H1 (cell line): ENCODE measurements at regions of chr6 and their contacts with region 1.

Region 1: DNA sequence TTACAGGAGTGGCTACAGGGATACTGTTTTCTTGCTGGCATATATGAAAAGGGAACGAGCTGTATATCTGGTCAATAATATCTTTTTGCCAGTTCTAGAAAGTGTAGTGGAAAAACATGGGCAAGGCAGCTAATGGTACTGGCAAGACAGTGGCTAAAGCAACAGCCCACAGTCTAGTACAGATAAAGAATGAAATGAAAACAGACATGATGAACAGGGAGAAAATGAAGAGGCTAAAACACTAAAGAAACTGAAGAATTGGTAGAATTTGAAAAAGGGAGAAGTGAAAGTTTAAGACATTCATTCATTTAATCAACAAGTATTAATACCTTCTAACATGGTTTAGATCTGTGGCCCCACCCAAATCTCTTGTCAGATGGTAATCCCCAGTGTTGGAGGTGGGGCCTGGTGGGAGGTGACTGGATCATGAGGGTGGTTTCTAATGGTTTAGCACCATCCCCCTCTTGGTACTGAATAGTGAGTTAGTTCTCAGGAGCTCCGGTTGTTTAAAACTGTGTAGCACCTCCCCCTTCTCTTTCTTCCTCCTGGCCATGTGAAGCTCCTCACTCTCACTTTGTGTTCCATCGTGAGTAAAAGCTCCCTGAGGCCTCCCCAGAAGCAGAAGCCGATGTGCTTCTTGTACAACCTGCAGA is 18.1 kb downstream of the FAM184A start:
- DNase-seq: no peak
- H3K4me3 ChIP-seq: no peak overlapping the region
- H3K27ac ChIP-seq: no peak overlapping the region
- H3K4me1 ChIP-seq: no peaks in the 10 kb centered on the region; a peak in 1 of 7 replicates
- H3K27me3 ChIP-seq: no peaks in the 10 kb centered on the region
- CTCF ChIP-seq: no peak
- EP300 ChIP-seq: no peak
- POLR2A ChIP-seq: no peak
- RAD21 ChIP-seq: no peak

Region 2: GRCh38 chr6:118993803-118994251 is 66.6 kb before region 1 on chr6:
- CTCF ChIA-PET with region 1: no interaction called
- POLR2A ChIA-PET with region 1: no interaction called
- DNase-seq: no peak
- H3K4me3 ChIP-seq: no peak overlapping the region
- H3K27ac ChIP-seq: no peak overlapping the region
- H3K4me1 ChIP-seq: no peaks in the 10 kb centered on the region
- H3K27me3 ChIP-seq: no peaks in the 10 kb centered on the region
- CTCF ChIP-seq: no peak
- EP300 ChIP-seq: no peak
- POLR2A ChIP-seq: no peak
- RAD21 ChIP-seq: no peak

Region 3: DNA sequence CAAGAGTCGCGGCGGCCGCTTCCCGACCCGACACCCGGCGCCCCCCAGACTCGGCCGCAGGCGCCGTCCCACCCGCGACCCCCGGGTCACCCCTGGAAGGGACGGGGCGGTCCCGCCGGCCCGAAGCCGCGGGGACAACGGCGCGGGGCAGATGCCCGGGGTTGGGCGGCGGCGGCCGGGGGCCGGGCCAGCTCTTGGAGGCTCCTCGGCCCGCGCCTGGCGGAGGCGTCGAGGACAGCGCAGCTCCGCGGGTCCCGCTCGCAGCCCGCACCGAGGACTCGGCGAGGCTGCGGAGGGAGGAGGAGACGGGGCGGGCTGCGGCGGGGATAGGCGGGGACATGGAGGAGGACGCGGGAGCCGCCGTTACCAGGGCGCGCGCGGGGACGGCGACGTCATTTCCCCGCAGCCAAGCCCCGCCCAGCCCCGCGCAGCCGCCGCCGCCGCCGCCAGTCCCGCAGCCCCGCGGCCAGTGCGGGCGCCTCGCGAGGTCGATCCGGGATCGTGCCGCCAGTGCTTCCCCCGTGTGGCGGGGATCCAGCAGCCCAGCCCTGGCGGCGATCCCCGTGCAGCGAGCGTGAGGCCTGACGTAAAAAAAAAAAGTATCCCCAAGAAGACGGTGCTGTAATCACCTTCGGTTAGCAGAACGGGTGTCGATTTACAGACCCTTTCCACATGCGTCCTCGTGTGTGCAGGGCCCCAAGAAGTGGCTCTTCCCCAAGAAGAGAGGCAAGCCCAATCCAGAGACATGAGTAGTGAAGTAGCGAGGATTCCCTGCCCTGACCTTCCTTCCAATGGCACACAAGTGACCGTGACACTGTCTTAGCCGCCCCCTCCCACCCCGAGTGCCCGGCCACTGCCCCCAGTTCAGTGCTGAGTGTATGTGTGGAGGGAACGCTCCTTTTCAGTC is 18.2 kb after region 1 on chr6 and contains the start of gene FAM184A:
- CTCF ChIA-PET with region 1: interaction called, 15 read pairs
- POLR2A ChIA-PET with region 1: interaction called, 5 read pairs
- DNase-seq: peak; percentile 7 to 80
- H3K4me3 ChIP-seq: peak within 1 kb of the TSS; percentile 47 to 66 (median 62)
- H3K27ac ChIP-seq: no peak within 1 kb of the TSS
- H3K4me1 ChIP-seq: peaks cover 0 to 5% (median 2%) of the 10 kb centered on the region in 4 experiments; a peak in 3 of 7 replicates
- H3K27me3 ChIP-seq: peaks cover 0 to 18% (median 6%) of the 10 kb centered on the region in 4 experiments; a peak in 3 of 7 replicates
- CTCF ChIP-seq: peak; percentile 56 to 75 (median 72)
- EP300 ChIP-seq: no peak
- POLR2A ChIP-seq: no peak; a peak in 1 of 3 replicates
- RAD21 ChIP-seq: peak; percentile 17 to 56; a peak in 3 of 4 replicates
- total RNA-seq, gene FAM184A: 11.3 and 12.1 TPM in 2 replicates